AG04449 (cell line): ENCODE measurements at regions of chr14 and their contacts with region 1.

Region 1: GRCh38 chr14:67359775-67360648 is at the starts of genes ATP6V1D and EIF2S1:
- DNase-seq: peak; percentile 96
- H3K4me3 ChIP-seq: peak within 1 kb of the TSS; percentile 97
- CTCF ChIP-seq: peak; percentile 79

Region 2: DNA sequence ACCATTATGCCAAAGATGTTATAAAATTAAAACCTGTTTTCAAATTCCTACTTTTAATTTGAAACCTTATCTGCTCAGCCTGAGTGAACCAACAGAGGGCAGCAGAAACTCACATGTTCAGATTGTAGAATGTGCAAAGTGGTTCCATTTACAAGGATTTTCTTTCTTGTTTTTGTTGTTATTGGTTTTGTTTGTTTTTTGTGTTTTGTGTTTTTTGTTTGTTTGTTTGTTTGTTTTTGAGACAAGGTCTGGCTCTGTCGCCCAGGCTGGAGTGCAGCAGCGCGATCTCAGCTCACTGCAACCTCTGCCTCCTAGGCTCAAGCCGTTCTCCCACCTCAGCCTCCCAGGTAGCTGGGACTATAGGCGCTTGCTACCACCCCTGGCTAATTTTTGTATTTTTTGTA is 193.6 kb before region 1 on chr14:
- CTCF ChIA-PET with region 1: interaction called, 11 read pairs
- POLR2A ChIA-PET with region 1: no interaction called
- DNase-seq: no peak
- H3K4me3 ChIP-seq: no peak overlapping the region
- CTCF ChIP-seq: peak; percentile 61

Region 3: DNA sequence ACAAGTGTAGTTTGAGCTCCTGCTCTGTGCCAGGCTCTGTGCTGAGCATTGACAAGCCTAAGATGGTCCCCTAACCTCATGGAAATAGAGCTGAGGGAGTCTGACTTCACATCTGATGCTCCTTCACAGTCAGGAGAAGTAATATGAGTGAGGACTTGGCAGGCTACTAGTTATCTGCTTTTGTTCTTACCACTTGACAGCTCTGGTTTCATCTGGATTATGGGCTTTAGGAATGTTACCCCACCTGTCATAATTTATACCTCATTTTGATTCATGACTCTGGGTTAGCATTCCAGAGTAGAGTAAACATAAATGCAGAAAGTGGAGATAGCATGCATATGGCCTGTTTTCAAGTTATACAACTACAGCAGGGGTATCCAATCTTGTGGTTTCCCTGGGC is 40.9 kb before region 1 on chr14:
- CTCF ChIA-PET with region 1: interaction called, 14 read pairs
- POLR2A ChIA-PET with region 1: no interaction called
- DNase-seq: no peak
- H3K4me3 ChIP-seq: no peak overlapping the region
- CTCF ChIP-seq: no peak

Region 4: DNA sequence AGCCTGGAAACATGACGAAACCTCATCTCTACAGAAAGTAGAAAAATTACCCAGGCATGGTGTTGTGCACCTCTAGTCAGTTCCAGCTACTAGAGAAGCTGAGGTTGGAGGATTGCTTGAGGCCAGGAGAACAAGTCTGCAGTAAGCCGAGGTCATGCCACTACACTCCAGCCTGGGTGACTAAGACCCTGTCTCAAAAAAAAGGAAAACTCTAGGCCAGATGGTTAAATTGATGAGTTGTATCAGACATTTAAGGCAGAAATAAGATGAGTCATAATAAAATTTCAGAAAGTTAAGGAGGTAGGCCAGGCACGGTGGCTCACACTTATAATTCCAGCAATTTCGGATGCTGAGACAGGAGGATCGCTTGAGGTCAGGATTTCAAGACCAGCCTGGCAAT is 10.8 kb after region 1 on chr14:
- CTCF ChIA-PET with region 1: interaction called, 47 read pairs
- POLR2A ChIA-PET with region 1: interaction called, 3 read pairs
- DNase-seq: no peak
- H3K4me3 ChIP-seq: no peak overlapping the region
- CTCF ChIP-seq: no peak

Region 5: GRCh38 chr14:67387195-67387594 is 27.2 kb after region 1 on chr14:
- CTCF ChIA-PET with region 1: interaction called, 58 read pairs
- POLR2A ChIA-PET with region 1: no interaction called
- DNase-seq: no peak
- H3K4me3 ChIP-seq: no peak overlapping the region
- CTCF ChIP-seq: no peak